Psoas muscle (tissue), 8 donors: ENCODE measurements at regions of chr1 and their contacts with region 1.

Region 1: GRCh38 chr1:180533266-180533987 is 25.3 kb upstream of the OVAAL start:
- DNase-seq: peak; percentile 62 to 72
- ATAC-seq: peak in 3 of 4 donors; percentile 78 to 88 (median 79)
- H3K4me3 ChIP-seq: no peak overlapping the region
- H3K27ac ChIP-seq: no peak overlapping the region
- H3K4me1 ChIP-seq: no peaks in the 10 kb centered on the region
- H3K27me3 ChIP-seq: peaks cover 0 to 2% (median 0%) of the 10 kb centered on the region in 3 donors
- CTCF ChIP-seq: peak; percentile 75

Region 2: DNA sequence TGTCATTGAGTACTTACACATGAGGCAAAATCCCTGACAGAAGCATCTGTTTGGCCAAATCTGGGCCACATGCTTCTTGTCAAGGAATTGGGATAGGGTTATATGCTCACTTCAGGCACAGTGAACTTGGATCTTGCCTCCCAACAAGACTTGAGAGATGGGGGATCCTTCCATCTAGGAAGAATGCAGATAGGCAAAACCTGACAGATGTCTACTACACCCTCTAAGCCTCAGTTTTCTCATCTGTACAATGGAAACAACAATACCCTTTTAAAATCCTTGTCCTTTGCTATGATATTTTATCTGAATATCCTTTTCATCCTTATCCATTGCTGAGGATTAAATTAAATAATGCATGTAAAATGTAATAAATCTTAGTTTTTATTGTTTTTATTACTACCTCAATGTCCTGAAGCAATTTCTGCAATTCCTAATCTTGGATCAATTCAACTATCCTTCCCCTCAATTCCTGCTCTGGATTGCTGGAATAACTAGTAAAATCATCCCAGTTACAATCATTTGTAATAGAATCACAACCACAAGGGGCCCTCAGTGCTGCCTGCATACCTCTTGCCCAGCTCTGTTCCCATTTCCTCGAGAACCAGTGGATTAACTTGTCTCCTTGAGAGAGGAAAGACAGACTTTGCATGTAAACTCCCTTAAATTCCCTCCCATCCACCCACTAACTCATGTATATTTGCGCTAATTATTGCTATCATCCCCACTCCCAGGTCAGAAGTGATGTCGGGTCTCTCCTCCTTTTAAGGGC is 90.3 kb after region 1 on chr1:
- intact Hi-C with region 1: loop called in 1 of 2 experiments (anchors 10 kb)
- DNase-seq: no peak
- ATAC-seq: no peak
- H3K4me3 ChIP-seq: no peak overlapping the region
- H3K27ac ChIP-seq: no peak overlapping the region
- H3K4me1 ChIP-seq: no peaks in the 10 kb centered on the region
- H3K27me3 ChIP-seq: no peaks in the 10 kb centered on the region
- CTCF ChIP-seq: peak; percentile 16